Upper lobe of right lung (tissue), 1 donor: ENCODE measurements at regions of chr14 and their contacts with region 1.

Region 1: DNA sequence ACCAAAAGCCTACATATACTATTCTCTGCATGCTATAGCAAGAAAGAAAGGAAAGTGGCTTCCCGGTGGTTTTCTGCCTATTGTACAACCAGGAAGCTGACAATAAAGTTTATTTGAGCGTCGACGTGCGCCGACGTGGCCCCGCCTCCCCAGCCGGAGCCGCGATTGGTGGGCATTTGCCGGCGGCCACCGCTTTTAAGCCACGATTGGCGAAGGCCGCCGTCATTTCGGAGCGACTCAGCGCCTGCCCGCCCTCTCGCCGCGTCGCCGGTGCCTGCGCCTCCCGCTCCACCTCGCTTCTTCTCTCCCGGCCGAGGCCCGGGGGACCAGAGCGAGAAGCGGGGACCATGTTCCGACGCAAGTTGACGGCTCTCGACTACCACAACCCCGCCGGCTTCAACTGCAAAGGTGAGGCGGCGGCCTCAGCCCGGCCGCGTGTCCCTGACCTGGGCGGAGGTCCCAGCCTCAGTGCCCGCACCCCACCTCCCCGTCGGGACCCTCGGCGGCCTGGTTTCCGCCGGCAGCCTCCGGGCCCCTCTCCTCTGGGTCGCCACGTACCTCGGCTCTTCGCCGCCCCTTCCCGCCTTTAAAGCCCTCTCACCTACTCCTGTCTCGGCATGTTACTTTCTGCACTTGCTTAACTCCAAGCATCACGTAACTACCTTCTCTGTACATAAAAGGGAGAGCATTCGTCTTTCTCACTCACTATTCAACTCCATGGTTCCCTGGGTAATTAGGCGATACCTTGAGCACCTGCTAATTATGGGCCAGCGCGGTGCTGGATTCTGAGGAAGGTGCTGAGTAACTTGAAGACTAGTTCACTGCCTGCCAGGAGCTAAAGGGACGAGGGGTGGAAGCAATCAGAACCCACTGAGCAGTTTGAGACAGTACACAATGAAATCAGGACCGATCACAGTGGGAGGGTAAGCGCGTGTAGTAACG is at the start of gene RTRAF:
- DNase-seq: peak; percentile 97
- ATAC-seq: peak; percentile 100
- H3K4me3 ChIP-seq: peak within 1 kb of the TSS; percentile 88
- H3K27ac ChIP-seq: peak within 1 kb of the TSS; percentile 90
- H3K4me1 ChIP-seq: peaks cover 21% of the 10 kb centered on the region
- H3K27me3 ChIP-seq: no peaks in the 10 kb centered on the region
- CTCF ChIP-seq: no peak
- total RNA-seq, gene RTRAF: 104 TPM

Region 2: DNA sequence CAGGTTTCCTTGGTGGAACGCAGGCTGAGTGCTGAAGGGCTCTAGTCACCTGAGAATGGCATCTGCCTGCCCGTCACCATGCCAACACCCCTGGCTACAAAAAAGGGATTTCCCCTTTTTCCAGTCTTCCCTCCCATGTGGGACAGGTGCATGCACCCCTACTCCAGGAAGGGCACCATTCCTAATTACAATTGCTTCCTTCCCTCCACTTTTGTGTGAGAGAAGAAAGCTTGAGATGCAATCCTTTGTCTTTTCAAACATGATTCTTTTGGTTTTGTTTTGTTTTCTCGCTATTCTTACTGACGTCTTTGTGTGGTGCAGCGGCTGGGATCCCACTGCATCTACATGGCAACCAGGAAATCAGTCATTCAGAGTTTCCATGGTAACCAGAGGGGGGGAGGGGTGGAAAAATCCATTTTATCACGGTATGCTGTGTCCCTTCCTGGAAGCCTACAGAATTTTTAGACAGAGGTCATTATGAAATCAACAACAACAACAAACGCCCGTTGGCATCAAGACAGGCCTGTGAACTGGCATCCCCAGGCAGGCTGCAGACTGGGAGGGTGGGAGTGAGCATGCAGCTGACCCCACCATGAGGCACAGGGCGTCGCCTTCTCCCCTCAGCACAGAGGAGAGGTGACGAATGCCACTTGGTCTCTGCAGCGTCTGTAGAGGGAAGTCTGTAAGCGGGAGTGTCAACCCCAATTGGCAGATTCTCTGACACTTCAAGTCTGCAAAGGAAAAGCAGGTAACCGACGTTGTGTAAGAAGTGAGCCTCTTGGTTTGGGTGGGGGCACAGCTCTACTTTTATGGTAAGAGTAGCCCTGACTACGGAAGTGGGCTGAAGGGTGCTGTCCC is 142.7 kb before region 1 on chr14:
- intact Hi-C with region 1: no loop called
- DNase-seq: peak; percentile 63
- ATAC-seq: peak; percentile 89
- H3K4me3 ChIP-seq: peak overlapping the region; percentile 28
- H3K27ac ChIP-seq: peak overlapping the region; percentile 75
- H3K4me1 ChIP-seq: peaks cover 3% of the 10 kb centered on the region
- H3K27me3 ChIP-seq: no peaks in the 10 kb centered on the region
- CTCF ChIP-seq: no peak

Region 3: GRCh38 chr14:52131640-52132320 is 142.2 kb after region 1 on chr14:
- intact Hi-C with region 1: loop called (anchors 10 kb)
- DNase-seq: no peak
- ATAC-seq: peak; percentile 63
- H3K4me3 ChIP-seq: no peak overlapping the region
- H3K27ac ChIP-seq: no peak overlapping the region
- H3K4me1 ChIP-seq: no peaks in the 10 kb centered on the region
- H3K27me3 ChIP-seq: no peaks in the 10 kb centered on the region
- CTCF ChIP-seq: peak; percentile 62